ENCODE measurements at regions of chr16 and their contacts with region 1.

Region 1: DNA sequence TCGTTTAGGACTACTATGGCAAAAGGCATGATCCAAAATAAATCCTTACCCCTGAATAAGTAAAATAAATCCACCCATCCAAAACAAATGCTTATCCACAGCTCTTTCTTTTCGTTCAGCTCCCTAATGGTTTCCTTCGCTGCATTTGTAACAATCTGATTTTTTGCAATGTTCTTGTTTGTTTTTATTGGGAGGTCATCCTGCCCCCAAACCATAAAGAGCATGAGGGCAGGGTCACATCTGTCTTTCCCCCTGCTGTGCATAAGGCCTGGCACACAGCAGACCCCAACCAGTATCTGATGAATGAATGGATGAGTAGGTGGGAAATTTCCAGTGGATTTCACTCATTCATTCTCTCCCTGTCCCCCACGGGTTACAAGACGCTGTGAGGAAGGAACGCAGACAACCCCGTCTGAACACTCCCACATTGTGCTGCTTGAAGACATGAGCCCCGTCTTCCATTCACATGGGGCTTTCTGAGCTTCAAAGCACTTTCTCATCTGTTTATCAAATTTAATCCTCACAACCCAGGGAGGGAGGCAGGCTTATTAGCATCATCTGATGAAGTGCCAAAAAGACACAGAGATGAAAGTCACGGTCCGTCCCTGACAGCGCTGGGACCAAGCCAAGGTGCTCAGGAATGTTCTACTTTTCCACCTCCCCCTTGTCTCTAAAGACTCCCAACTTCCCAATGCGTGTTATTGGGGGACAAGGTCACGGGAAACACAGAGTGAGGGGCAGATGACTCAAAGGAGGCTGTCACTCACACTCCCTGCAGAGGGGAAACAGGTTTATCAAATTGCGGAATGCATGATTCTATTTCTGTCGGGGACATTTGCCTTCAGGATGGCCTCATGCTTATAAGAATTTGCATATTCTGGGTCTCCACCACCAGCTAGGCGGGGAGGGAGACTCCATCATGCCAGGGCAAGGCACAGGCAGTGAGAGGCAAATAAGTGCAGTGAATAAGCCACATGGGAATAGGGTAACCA is 10.9 kb downstream of the XYLT1 start:
- DNase-seq: peak; percentile 73
- ATAC-seq: peak; percentile 81
- H3K4me3 ChIP-seq: peak overlapping the region in 1 of 5 experiments; percentile 19
- H3K4me3 Mint-ChIP-seq: peak overlapping the region; percentile 84
- H3K27ac ChIP-seq: peak overlapping the region in 1 of 2 donors; percentile 15
- H3K27ac Mint-ChIP-seq: peak overlapping the region; percentile 79
- H3K4me1 ChIP-seq: peaks cover 48 to 50% of the 10 kb centered on the region in 2 donors
- H3K4me1 Mint-ChIP-seq: peaks cover 56% of the 10 kb centered on the region
- H3K27me3 ChIP-seq: no peaks in the 10 kb centered on the region
- H3K27me3 Mint-ChIP-seq: no peaks in the 10 kb centered on the region
- CTCF ChIP-seq: no peak

Region 2: GRCh38 chr16:17476414-17477270 is 16.8 kb after region 1 on chr16:
- CTCF ChIA-PET with region 1: interaction called, 7 read pairs
- POLR2A ChIA-PET with region 1: interaction called, 10 read pairs
- intact Hi-C with region 1: no loop called
- DNase-seq: peak; percentile 73
- ATAC-seq: peak; percentile 74
- H3K4me3 ChIP-seq: no peak overlapping the region
- H3K4me3 Mint-ChIP-seq: peak overlapping the region; percentile 54
- H3K27ac ChIP-seq: no peak overlapping the region
- H3K27ac Mint-ChIP-seq: no peak overlapping the region
- H3K4me1 ChIP-seq: peaks cover 27 to 31% of the 10 kb centered on the region in 2 donors
- H3K4me1 Mint-ChIP-seq: peaks cover 31% of the 10 kb centered on the region
- H3K27me3 ChIP-seq: peaks cover 0 to 5% (median 0%) of the 10 kb centered on the region in 4 experiments
- H3K27me3 Mint-ChIP-seq: peaks cover 18% of the 10 kb centered on the region
- CTCF ChIP-seq: peak; percentile 48

Measured in B cell (primary cell).